ENCODE measurements at regions of chr2 and their contacts with region 1.

Region 1: GRCh38 chr2:96536445-96537065 is at the start of gene ARID5A:
- DNase-seq: peak; percentile 86
- H3K4me3 Mint-ChIP-seq: peak within 1 kb of the TSS; percentile 91
- H3K27ac Mint-ChIP-seq: peak within 1 kb of the TSS; percentile 88
- H3K4me1 Mint-ChIP-seq: peaks cover 74% of the 10 kb centered on the region
- H3K27me3 Mint-ChIP-seq: peaks cover 1% of the 10 kb centered on the region
- total RNA-seq, gene ARID5A: 233 and 240 TPM in 2 replicates

Region 2: GRCh38 chr2:96265840-96266679 is 270.5 kb before region 1 on chr2 and contains the starts of genes CIAO1 and TMEM127:
- intact Hi-C with region 1: loop called (anchors 1 kb)
- DNase-seq: peak; percentile 99
- H3K4me3 Mint-ChIP-seq: peak within 1 kb of the TSS; percentile 96
- H3K27ac Mint-ChIP-seq: peak within 1 kb of the TSS; percentile 94
- H3K4me1 Mint-ChIP-seq: peaks cover 33% of the 10 kb centered on the region
- H3K27me3 Mint-ChIP-seq: no peaks in the 10 kb centered on the region
- total RNA-seq, gene CIAO1: 111 and 115 TPM in 2 replicates
- total RNA-seq, gene TMEM127: 29.7 and 30.1 TPM in 2 replicates

Region 3: GRCh38 chr2:96336104-96336775 is 200.3 kb before region 1 on chr2:
- intact Hi-C with region 1: loop called (anchors 5 kb)
- DNase-seq: no peak
- H3K4me3 Mint-ChIP-seq: peak overlapping the region; percentile 95
- H3K27ac Mint-ChIP-seq: peak overlapping the region; percentile 93
- H3K4me1 Mint-ChIP-seq: peaks cover 67% of the 10 kb centered on the region
- H3K27me3 Mint-ChIP-seq: no peaks in the 10 kb centered on the region

Region 4: GRCh38 chr2:96554293-96555145 is 18.0 kb after region 1 on chr2:
- intact Hi-C with region 1: loop called (anchors 1 kb)
- DNase-seq: peak; percentile 56
- H3K4me3 Mint-ChIP-seq: no peak overlapping the region
- H3K27ac Mint-ChIP-seq: peak overlapping the region; percentile 34
- H3K4me1 Mint-ChIP-seq: peaks cover 23% of the 10 kb centered on the region
- H3K27me3 Mint-ChIP-seq: no peaks in the 10 kb centered on the region

Region 5: DNA sequence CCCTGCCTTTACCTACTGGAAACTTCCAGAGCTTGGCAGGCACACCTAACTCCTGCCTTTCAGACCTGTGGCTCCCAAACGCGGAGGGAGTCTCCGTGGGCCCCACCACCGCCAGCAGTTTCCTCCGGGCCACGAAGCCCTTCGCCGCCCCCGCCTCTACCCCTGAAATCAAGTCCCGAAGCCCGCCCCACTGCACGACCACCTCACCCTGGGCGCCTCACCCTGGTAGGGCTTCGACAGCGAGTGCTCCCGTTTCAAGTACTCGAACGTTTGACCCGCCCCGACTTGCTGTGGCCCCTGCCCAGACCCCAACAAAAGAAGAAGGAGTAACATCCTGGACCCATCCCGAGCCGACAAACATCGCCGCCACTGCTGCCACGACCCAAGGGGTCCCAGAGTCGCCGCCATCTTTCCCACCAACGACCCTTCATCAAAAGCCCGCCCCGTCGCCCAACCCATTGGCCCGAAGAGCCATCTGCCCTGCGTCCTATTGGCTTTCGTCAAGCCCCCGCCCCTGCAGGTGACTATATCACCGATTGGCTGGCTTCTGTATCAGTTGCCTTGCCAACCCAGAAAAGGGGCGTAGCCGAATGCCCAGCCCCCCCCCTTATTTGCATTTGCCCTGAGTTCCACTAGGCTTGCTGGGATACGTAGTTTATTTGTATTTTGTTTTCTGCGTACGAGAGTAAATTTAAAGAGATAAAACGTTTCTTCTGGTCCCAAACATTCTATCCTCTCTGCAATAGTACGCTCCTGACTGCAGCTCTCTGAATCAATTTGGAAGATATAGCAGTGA is 203.3 kb after region 1 on chr2 and contains the start of gene LMAN2L:
- intact Hi-C with region 1: loop called (anchors 2 kb)
- DNase-seq: peak; percentile 94
- H3K4me3 Mint-ChIP-seq: peak within 1 kb of the TSS; percentile 90
- H3K27ac Mint-ChIP-seq: peak within 1 kb of the TSS; percentile 77
- H3K4me1 Mint-ChIP-seq: peaks cover 32% of the 10 kb centered on the region
- H3K27me3 Mint-ChIP-seq: no peaks in the 10 kb centered on the region
- total RNA-seq, gene LMAN2L: 5.6 and 6.0 TPM in 2 replicates

Region 6: DNA sequence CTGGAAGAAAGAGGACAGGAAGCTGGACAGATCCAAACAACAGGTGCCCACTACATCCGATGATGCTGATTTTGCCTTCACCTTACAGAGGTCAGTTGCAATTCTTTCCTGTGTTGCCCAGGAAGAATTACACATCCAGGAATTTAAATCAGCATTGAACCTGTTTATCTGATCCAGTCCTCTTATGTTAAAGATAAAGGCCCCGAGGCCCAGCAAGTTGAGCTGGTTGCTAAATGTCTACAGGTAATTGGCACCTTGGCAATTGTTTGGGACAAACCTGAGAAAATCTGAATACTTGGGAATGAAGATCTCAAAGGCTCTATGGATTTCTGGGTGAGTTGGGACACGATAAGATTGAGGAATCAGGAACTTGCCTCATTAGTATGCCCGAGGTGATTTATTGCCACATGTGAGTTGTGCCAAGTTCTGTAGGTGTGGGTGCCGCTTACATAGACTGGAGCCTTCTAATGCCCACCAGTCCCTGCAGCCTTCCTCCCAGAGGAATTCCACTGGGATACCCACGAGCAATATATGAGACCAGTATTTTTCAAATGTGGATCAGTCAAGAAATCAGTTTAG is 217.2 kb after region 1 on chr2:
- intact Hi-C with region 1: no loop called
- DNase-seq: no peak
- H3K4me3 Mint-ChIP-seq: no peak overlapping the region
- H3K27ac Mint-ChIP-seq: no peak overlapping the region
- H3K4me1 Mint-ChIP-seq: peaks cover under 1% of the 10 kb centered on the region
- H3K27me3 Mint-ChIP-seq: peaks cover 12% of the 10 kb centered on the region